ENCODE measurements at regions of chr2 and their contacts with region 1.

Region 1: DNA sequence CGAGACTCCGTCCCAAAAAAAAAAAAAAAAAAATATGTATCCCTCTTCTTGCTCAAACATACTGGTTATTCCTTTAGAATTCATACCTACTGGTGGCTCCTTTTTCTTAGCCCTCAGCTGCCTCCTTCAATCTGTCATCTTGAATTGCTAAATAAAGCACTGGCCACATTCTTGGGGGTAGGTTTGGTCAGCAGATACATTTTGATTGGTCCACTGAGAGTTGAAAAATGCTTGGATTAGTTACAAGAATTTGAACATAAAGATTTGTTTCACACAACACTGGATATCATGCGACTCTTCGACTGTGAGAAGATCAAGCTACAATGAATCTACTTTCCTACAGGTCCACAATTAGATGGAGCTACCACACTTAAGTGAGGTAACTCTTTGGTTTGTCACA is 906.1 kb upstream of the SLC39A10 start:
- DNase-seq: no peak

Region 2: DNA sequence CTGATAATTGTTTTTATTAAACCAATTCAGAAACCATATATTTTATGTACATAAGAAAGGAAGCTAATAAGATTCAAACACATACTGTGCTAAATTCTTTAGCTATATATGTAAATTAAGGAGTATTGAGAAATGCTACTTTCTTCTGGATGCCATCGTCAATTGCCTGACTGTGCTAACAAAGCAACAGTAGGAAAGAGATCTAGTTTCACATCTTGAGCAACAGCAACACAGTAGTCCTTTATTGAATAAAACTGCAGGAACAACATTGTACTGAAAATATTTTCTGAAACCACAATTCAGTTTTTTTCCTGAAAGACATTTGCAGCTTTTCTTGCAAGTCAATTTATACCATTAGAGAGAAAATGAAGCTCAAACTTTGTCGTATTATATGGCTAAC is 498.8 kb before region 1 on chr2:
- intact Hi-C with region 1: no loop called
- DNase-seq: no peak

Region 3: DNA sequence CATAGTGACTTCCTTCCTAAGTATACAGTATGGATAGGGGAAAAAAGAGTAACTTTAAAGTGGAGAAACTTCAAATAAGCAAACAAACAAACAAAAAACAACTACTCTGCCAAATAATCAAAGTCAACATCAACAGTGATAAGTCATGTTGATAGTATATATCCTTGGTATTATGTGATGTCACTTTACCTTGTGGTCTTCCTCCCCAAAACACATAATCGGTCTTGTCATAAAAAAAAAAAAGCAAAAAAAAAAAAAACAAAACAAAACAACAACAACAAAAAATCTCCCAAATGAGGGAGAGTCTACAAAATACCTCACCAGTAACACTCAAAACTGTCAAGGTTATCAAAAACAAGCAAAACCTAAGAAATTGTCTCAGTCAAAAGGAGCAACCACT is 10.5 kb before region 1 on chr2:
- intact Hi-C with region 1: loop called (anchors 1 kb)
- DNase-seq: no peak

Measured in cardiac septum (tissue), 1 donor.